Heart left ventricle (tissue), 16 donors: ENCODE measurements at regions of chr15 and their contacts with region 1.

Region 1: DNA sequence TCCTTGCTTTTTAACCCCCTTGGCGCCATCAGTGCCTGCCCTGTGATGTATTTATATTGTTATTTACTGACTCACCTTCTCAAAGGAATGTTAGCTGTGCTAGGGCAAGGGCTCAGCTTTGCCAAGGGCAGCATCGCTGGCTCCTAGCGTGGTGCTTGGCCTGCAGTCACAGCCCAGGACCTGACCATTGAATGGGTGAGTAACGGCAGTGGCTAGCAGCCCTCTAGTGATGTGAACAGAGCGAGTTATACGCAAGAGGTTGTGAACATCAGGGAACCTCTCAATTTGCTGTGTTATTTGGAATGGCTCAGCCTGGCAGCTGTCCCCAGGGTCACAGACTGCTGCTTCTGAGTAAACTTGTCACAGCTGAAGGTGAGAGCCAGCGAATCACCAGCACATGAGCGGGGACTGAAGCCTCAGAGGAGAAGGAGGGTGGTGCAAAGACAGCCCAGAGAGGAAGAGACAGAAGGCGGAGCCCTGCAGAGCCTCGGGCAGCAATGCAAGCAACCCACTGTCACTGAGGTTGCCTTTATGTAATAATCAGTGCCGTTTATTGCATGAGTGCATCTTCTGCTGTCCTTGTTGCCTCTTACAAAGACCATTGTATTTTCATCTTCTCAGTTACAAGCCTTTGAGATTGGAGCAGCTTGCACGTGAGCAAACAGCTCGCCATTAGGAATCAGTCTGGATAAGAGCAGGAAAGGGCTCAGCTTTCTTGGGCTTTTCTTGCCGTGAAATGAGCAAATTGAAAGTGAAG is 158.3 kb downstream of the SLCO3A1 start:
- DNase-seq: peak in 3 of 5 donors; percentile 52 to 66 (median 61)
- ATAC-seq: peak in 3 of 4 donors; percentile 62 to 84 (median 79)
- H3K4me3 ChIP-seq: peak overlapping the region in 6 of 12 donors; percentile 4 to 38 (median 14)
- H3K27ac ChIP-seq: peak overlapping the region in 9 of 12 donors; percentile 4 to 80 (median 57)
- H3K4me1 ChIP-seq: peaks cover 10 to 67% (median 55%) of the 10 kb centered on the region in 12 donors
- H3K27me3 ChIP-seq: no peaks in the 10 kb centered on the region
- CTCF ChIP-seq: no peak
- POLR2A ChIP-seq: no peak

Region 2: GRCh38 chr15:91857772-91858171 is 154.0 kb before region 1 on chr15:
- intact Hi-C with region 1: no loop called
- DNase-seq: no peak
- ATAC-seq: no peak
- H3K4me3 ChIP-seq: no peak overlapping the region
- H3K27ac ChIP-seq: peak overlapping the region in 6 of 12 donors; percentile 4 to 98 (median 27)
- H3K4me1 ChIP-seq: peaks cover 8 to 86% (median 64%) of the 10 kb centered on the region in 12 donors
- H3K27me3 ChIP-seq: no peaks in the 10 kb centered on the region
- CTCF ChIP-seq: no peak
- POLR2A ChIP-seq: no peak

Region 3: GRCh38 chr15:91961357-91961756 is 50.4 kb before region 1 on chr15:
- intact Hi-C with region 1: no loop called
- DNase-seq: no peak
- ATAC-seq: no peak
- H3K4me3 ChIP-seq: no peak overlapping the region
- H3K27ac ChIP-seq: peak overlapping the region in 1 of 12 donors; percentile 74
- H3K4me1 ChIP-seq: peaks cover 0 to 58% (median 38%) of the 10 kb centered on the region in 12 donors
- H3K27me3 ChIP-seq: no peaks in the 10 kb centered on the region
- CTCF ChIP-seq: no peak
- POLR2A ChIP-seq: no peak

Region 4: GRCh38 chr15:92059056-92059960 is 47.5 kb after region 1 on chr15:
- intact Hi-C with region 1: loop called in 1 of 10 experiments (anchors 5 kb)
- DNase-seq: peak in 4 of 5 donors; percentile 50 to 79 (median 56)
- ATAC-seq: peak; percentile 53 to 67 (median 62)
- H3K4me3 ChIP-seq: no peak overlapping the region
- H3K27ac ChIP-seq: peak overlapping the region in 9 of 12 donors; percentile 48 to 80 (median 65)
- H3K4me1 ChIP-seq: peaks cover 0 to 68% (median 33%) of the 10 kb centered on the region in 12 donors
- H3K27me3 ChIP-seq: no peaks in the 10 kb centered on the region
- CTCF ChIP-seq: no peak
- POLR2A ChIP-seq: no peak